ENCODE measurements at regions of chr6 and their contacts with region 1.

Region 1: GRCh38 chr6:34196126-34196830 is 40.4 kb upstream of the HMGA1 start:
- DNase-seq: peak; percentile 93
- CTCF ChIP-seq: peak; percentile 98

Region 2: DNA sequence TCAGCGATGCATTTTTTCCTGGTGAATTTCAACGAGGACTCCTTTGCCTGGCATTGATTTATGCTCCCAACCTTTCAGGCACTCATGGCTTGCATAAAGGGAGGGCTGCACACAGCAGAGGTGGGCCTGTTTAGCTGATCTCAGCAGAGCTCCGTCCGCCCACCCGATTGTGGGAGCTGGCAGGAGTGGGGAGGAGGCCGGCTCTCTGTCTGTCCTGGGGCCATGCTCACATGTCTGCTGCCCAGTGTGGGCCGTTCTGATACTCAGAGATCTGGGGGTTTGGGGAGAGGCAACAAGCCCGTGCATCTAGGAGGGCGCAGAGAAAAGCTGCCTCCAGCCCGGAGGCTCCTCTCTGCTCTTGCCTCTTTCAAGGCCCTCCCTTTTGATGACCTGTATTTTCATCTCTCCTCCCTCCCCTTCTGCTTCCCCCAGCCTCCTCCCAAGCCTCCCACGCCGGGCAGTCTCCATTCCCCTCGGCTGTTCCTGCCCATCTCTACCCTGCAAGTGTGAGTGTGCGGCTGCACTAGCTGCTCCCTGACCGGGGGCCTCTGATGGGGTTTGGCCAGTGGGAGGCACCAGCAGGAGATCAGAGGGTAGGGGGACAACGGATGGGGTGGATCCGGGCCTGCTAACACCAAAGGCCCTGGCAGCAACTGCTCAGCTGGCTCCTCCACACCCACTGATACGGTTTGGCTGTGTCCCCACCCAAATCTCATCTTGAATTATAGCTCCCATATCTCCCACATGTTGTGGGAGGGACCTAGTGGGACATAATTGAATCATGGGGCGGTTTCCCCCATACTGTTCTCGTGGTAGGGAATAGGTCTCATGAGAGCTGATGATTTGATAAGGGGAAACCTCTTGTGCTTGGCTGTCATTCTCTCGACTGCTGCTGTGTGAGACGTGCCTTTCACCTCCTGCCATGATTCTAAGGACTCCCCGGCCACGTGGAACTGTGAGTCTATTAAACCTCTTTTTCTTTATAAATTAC is 352.9 kb before region 1 on chr6:
- CTCF ChIA-PET with region 1: no interaction called
- POLR2A ChIA-PET with region 1: no interaction called
- DNase-seq: no peak
- CTCF ChIP-seq: no peak

Region 3: DNA sequence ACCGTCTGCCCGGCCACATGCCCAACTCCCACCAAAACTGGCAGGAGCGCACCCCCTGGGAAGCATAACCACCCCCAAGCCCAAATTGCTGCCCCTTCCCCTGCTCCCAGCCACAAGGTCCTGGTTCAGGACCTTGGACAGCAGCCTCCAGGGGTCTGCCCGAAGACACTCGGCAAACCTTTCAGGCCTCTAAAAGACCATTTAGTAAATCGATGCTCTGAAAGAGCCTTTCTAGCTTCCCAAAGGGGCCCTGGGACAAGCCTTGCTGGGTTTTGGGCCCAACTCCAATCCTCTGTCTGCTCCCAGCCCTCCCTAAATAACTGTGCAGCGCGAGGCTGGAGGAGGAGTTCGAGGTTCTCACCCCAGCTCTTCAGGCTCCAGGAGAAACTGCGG is 80.9 kb before region 1 on chr6:
- CTCF ChIA-PET with region 1: no interaction called
- POLR2A ChIA-PET with region 1: no interaction called
- DNase-seq: peak; percentile 55
- CTCF ChIP-seq: no peak

Region 4: GRCh38 chr6:34161857-34162515 is 34.3 kb before region 1 on chr6:
- CTCF ChIA-PET with region 1: interaction called, 19 read pairs
- POLR2A ChIA-PET with region 1: no interaction called
- DNase-seq: no peak
- CTCF ChIP-seq: no peak

Region 5: DNA sequence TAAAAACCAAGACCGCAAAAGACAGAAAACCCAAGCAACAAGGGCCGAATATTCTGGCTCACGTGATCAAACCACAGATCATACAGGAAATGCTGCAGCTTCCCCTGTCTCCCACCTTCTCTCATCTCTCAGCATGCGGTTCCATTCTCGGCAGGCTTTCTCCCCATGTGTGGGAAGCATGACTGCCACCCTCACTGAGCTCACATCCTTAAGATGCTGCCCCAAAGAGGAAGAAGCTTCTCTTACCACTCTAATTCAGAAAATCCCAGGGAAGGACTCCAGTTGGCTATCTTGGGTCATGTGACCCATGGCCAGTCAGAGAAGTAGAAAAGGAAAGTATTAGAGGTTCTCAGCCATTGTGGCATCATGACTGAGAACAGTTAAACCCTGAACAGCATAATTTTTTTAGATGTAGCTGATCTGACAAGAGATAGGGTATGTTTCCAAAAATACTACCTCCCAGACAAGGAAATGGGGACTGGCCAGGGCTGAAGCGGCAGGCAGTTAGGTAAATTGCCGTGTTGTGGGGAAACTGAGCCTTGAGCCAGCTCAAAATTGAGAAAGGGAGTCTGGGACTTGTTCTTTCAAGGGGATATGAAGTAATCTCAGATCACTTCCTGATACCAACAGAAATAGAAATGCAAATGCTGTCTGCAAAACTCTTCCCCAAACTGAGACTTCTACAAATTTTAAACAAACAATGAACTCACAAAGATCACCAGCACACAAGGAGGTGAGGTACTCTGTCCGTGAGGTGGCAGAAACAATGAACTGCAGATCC is 13.3 kb before region 1 on chr6:
- CTCF ChIA-PET with region 1: interaction called, 21 read pairs
- POLR2A ChIA-PET with region 1: no interaction called
- DNase-seq: peak; percentile 68
- CTCF ChIP-seq: no peak

Region 6: GRCh38 chr6:34223956-34224940 is 28.0 kb after region 1 on chr6:
- CTCF ChIA-PET with region 1: interaction called, 12 read pairs
- POLR2A ChIA-PET with region 1: no interaction called
- DNase-seq: peak; percentile 96
- CTCF ChIP-seq: no peak

Region 7: DNA sequence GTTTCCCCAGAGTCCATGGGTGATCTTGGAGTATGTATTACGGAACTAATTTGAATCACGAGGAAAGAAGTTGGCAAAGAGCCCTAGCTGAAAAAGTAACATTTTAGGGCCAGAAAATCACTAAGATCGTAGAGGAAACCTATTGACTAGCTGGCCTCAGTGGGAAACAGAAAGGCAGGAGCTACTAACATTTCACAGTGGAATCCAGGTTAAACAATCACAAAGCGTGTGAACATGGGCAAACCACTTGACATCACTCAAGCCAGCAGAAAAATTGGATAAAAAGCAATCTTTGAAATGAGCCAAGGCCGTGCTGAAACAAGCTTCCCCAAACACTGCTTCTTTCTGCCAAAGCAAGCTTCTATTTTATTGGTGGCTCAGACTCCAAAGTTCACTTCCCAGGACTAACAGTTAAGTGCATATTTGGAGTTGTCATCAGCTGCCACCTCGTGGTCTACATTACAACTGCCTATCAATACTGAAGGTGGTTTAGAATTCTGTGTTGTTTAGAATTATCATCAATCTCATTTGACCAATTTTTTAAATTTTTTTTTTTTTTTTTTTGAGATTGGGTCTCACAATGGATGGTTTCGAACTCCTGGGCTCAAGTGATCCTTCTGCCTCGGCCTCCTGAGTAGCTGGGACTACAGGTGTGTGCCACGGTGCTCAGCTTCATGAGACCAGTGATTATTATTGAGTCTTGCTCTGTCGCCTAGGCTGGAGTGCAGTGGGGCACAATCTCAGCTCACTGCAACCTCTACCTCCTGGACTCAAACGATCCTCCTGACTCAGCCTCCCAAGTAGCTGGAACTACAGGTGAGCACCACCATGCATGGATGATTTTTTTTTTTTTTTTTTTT is 219.0 kb after region 1 on chr6:
- CTCF ChIA-PET with region 1: interaction called, 48 read pairs
- POLR2A ChIA-PET with region 1: interaction called, 3 read pairs
- DNase-seq: peak; percentile 55
- CTCF ChIP-seq: peak; percentile 55

Measured in GM10248 (cell line).